GM10248 (cell line): ENCODE measurements at regions of chr20 and their contacts with region 1.

Region 1: GRCh38 chr20:15930311-15931305 is 642.6 kb downstream of the KIF16B start:
- DNase-seq: no peak
- CTCF ChIP-seq: peak; percentile 25

Region 2: DNA sequence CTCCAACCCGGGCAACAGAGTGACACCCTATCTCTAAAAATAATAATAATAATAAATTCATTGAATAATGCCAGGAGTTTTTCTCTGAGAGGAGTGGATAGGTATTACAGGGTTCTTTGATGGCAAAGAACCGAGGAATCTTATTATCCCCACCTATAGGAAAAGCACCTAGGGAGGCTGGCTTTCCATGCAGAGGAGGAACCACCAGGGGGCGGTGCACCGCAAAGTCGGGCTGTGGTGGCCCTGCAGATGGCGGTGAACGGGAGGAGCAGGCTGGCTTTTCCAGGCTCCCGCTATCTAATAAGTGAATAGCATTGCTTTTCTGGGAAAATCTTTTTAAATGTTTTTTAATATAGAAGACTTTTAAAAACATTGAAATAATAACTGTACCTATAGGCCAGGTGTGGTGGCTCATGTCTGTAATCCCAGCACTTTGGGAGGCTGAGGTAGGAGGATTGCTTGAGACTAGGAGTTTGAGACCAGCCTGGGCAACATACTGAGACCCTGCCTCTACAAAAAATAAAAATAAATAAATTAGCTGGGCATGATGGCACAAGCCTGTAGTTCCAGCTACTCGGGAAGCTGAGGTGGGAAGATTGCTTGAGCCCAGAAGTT is 221.5 kb before region 1 on chr20:
- CTCF ChIA-PET with region 1: interaction called, 12 read pairs
- POLR2A ChIA-PET with region 1: no interaction called
- DNase-seq: peak; percentile 64
- CTCF ChIP-seq: peak; percentile 71

Region 3: DNA sequence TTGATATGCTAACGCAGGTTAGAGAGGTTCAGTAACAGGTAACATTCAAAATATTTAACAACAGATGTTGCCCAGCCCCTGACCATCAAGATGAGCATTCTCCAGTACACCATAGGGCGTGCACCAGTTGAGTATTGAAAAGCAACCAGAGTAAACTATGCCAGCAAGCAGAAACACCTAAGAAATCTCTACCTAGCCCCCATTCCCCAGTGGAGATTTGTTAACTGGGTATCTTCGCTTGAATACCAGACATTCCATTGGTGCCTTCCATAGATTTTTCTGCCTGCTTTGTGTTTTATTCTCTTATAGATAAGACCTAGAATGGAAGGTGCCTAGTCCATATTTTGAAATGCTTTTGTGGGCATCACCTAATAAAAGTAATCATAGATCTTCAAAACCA is 18.8 kb after region 1 on chr20:
- CTCF ChIA-PET with region 1: no interaction called
- POLR2A ChIA-PET with region 1: no interaction called
- DNase-seq: no peak
- CTCF ChIP-seq: no peak

Region 4: DNA sequence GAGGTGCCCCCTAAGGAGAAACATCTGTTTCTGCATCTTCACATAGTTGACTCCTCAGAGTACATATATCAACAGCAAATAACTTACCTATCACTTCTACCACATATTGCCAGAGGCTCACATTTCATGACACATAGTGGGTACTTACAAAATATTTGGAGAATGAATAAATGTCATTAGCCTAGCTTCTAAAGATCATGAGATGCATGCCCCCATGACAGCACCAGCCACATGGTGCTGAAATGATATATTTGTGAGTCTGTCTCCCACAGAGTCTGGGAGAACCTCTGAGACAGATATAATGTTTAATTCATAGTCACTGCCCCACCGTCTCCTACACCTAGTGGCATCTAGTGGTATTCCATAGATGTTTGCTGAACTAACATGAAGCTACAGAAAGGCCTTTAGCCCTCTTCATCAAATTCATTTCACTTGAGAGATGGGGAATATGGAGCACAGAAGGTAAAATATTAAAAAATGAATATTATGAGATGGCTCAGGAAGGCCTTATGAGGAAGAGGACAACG is 87.1 kb after region 1 on chr20:
- CTCF ChIA-PET with region 1: no interaction called
- POLR2A ChIA-PET with region 1: no interaction called
- DNase-seq: no peak
- CTCF ChIP-seq: no peak

Region 5: GRCh38 chr20:16246873-16247272 is 316.3 kb after region 1 on chr20:
- CTCF ChIA-PET with region 1: no interaction called
- POLR2A ChIA-PET with region 1: no interaction called
- DNase-seq: no peak
- CTCF ChIP-seq: no peak

Region 6: DNA sequence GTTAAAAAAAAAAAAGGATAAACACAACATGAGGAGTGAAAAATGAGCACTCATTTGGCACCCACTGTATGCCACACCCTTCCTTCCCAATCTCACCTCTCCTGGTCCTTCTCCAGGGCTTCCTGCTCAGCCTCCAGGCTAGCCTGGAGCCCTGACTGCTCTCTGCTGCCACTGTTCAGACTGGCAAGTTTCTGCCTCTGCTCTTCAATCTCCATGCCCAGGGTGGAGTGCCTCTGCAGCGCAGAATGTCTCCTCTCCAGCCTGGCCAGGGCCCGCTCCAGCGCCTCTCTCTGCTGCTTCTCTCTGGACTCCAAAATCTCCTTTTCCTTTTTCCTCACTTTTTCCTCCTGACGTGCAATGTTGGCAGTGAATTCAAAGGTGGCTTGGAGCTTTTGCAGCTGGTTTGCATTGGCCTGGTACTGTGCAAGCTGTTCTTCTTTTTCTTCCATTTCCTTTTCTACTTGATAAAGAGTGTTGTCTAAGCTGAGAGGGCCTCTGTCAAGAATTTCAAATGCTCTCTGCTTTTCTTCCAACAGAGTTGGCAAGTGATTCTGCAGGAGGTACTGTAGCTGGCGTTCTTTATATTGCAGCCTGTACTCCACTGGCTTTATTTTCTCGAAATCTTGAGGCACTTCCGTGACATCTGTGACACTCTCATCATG is 448.2 kb after region 1 on chr20:
- CTCF ChIA-PET with region 1: no interaction called
- POLR2A ChIA-PET with region 1: no interaction called
- DNase-seq: no peak
- CTCF ChIP-seq: no peak